ENCODE measurements at regions of chr3 and their contacts with region 1.

Region 1: GRCh38 chr3:17233398-17233800 is 348.6 kb downstream of the PLCL2 start:
- DNase-seq: no peak
- H3K4me3 ChIP-seq: no peak overlapping the region
- H3K27ac ChIP-seq: no peak overlapping the region
- H3K4me1 ChIP-seq: peaks cover 54% of the 10 kb centered on the region
- H3K27me3 ChIP-seq: no peaks in the 10 kb centered on the region
- CTCF ChIP-seq: peak; percentile 80

Region 2: GRCh38 chr3:16600780-16601539 is 632.4 kb before region 1 on chr3:
- intact Hi-C with region 1: loop called (anchors 5 kb)
- DNase-seq: peak; percentile 79
- H3K4me3 ChIP-seq: no peak overlapping the region
- H3K27ac ChIP-seq: no peak overlapping the region
- H3K4me1 ChIP-seq: peaks cover 7% of the 10 kb centered on the region
- H3K27me3 ChIP-seq: no peaks in the 10 kb centered on the region
- CTCF ChIP-seq: peak; percentile 92

Measured in left ventricle myocardium inferior (tissue), 1 donor.